ENCODE measurements at regions of chr10 and their contacts with region 1.

Region 1: DNA sequence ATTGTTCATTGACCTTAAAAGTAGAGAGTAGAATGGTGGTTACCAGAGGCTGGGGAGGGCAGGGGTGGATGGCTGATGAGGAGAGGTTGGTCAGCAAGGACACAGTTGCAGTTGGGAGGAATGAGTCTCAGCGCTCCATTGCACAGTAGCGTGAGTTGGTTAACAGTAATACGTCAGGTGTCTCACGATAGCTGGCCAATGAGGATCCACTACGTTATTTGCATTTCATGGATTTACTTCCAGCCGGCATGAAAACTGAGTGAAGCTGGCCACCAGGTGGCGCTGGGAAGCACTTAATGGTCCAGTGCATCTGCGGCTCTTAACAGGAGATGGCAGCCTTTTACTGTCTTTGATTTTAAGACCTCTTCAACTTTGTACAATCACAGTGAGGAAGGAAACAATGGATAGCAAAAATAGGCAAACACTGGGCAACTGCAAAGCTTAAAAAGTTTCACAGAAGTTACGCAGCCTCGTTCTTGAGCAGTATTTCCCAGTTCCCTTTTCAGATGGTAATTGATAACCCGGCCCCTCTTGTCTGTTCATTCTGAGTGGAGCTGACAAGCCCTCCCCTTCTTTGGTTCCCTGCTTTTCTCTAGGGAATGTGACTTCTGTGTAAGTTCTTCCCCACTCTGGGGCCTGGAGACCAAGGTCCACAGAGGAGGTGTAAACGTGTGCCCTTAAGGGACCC is 23.7 kb downstream of the AKR1E2 start:
- DNase-seq: peak; percentile 98
- H3K4me3 ChIP-seq: no peak overlapping the region
- H3K27ac ChIP-seq: no peak overlapping the region
- H3K4me1 ChIP-seq: peaks cover 22% of the 10 kb centered on the region
- H3K27me3 ChIP-seq: no peaks in the 10 kb centered on the region
- CTCF ChIP-seq: peak; percentile 95 to 100
- POLR2A ChIP-seq: no peak

Region 2: DNA sequence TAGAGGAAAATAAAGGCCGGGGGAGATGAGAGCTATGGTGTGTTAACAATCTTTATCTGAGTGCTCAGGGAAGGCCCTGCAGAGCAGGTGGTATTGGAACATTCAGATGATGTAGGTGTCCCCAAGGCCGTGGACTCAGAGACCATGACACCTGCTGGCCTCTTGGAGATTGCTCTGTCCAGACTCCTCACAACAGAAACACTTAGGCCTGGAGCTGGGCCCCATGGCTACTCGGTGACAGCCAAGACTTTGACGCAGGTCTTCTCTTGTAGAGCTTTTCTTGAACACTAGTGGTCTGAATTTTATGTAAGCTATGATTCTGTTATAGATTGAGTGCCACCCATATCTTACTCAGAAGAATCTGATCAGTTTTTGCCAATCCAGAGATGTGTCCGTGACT is 10.3 kb before region 1 on chr10:
- CTCF ChIA-PET with region 1: interaction called, 22 read pairs
- POLR2A ChIA-PET with region 1: no interaction called
- dilution Hi-C with region 1: no loop called
- intact Hi-C with region 1: no loop called
- DNase-seq: no peak
- H3K4me3 ChIP-seq: no peak overlapping the region
- H3K27ac ChIP-seq: no peak overlapping the region
- H3K4me1 ChIP-seq: no peaks in the 10 kb centered on the region
- H3K27me3 ChIP-seq: no peaks in the 10 kb centered on the region
- CTCF ChIP-seq: peak in 1 of 2 donors; percentile 1
- POLR2A ChIP-seq: no peak

Region 3: DNA sequence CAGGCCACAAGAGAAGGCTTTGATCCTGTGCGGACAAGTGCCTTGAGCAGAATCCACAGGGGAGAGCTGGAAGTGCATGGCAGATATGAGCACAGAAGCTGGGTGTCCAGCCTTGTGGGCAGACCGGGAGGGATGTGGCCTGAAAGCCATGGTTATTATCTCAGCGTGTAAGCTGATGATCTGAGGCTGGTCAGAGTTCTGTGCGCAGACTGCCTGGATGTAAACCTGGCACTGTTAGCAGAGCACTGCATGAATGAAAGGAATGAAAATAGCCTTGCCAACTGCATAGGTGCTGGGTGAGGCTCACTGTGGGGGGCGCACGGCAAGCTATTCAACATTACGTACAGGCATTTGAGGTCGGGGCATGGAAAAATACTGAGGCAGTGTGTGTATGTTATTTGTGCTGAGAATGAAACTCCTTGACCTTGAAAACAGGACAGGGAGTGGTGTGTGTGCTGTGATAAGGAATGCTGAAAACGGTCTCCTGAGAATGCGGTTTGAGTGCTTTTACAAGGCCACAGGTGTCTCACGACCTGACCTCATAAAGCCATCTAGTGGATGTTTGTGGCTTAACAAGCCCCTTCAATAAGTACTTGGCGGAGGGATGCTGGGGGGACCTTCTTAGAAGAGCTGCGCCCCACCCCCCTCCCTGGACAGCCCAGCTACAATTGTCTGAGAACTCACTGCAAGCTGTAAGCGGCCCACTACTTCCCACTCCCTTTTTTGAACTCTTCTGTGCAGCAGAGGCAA is 132.2 kb after region 1 on chr10:
- CTCF ChIA-PET with region 1: interaction called, 136 read pairs
- POLR2A ChIA-PET with region 1: interaction called, 3 read pairs
- dilution Hi-C with region 1: no loop called
- intact Hi-C with region 1: loop called (anchors 1 kb)
- DNase-seq: peak; percentile 62
- H3K4me3 ChIP-seq: no peak overlapping the region
- H3K27ac ChIP-seq: no peak overlapping the region
- H3K4me1 ChIP-seq: peaks cover 3% of the 10 kb centered on the region
- H3K27me3 ChIP-seq: peaks cover 0 to 3% of the 10 kb centered on the region in 2 experiments
- CTCF ChIP-seq: peak; percentile 48 to 50
- POLR2A ChIP-seq: no peak

Region 4: DNA sequence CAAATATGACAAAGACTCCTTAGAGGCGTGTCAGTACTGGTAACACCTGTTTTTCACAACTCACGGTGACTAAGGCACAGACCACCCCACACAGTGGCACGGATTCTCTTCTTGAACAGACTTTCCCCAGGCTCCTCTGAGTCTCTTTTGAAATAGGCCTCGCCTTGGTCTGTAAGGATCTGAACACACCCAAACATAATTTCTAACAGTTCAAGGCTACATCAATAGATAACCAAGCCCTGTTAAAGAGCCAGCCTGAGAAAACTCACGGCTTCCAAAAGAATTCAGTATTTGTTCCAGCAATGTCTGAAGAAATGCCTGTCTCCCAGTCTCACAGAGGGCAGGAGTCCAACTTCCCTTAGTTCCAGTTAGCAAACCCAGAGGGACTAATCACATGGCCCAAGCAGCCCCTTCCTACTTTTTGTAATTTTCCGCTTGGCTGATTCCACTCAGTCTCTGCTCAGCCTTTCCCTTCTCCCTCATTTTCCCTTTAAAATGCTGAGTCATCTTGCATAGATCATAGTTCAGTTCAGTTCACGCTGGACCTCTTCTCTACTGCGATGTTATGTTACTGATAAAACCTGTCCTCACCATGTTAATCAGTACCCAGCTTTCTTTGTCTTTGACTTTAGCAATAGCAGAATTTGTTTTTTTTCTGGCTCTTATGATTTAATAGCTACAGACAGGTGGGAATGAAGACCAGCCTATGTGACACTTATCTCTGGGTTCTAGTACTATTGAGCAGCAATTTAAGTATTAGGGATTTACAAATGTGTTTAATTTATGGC is 221.9 kb after region 1 on chr10:
- CTCF ChIA-PET with region 1: no interaction called
- POLR2A ChIA-PET with region 1: no interaction called
- dilution Hi-C with region 1: no loop called
- intact Hi-C with region 1: no loop called
- DNase-seq: peak; percentile 78
- H3K4me3 ChIP-seq: no peak overlapping the region
- H3K27ac ChIP-seq: no peak overlapping the region
- H3K4me1 ChIP-seq: peaks cover 3% of the 10 kb centered on the region
- H3K27me3 ChIP-seq: no peaks in the 10 kb centered on the region
- CTCF ChIP-seq: no peak
- POLR2A ChIP-seq: no peak

Region 5: GRCh38 chr10:5293691-5294550 is 444.2 kb after region 1 on chr10:
- CTCF ChIA-PET with region 1: interaction called, 10 read pairs
- POLR2A ChIA-PET with region 1: no interaction called
- dilution Hi-C with region 1: no loop called
- intact Hi-C with region 1: no loop called
- DNase-seq: peak; percentile 44
- H3K4me3 ChIP-seq: no peak overlapping the region
- H3K27ac ChIP-seq: peak overlapping the region; percentile 20
- H3K4me1 ChIP-seq: peaks cover 29% of the 10 kb centered on the region
- H3K27me3 ChIP-seq: no peaks in the 10 kb centered on the region
- CTCF ChIP-seq: peak; percentile 63 to 70
- POLR2A ChIP-seq: no peak

Region 6: GRCh38 chr10:5423771-5424170 is 574.1 kb after region 1 on chr10:
- CTCF ChIA-PET with region 1: interaction called, 20 read pairs
- POLR2A ChIA-PET with region 1: no interaction called
- dilution Hi-C with region 1: no loop called
- intact Hi-C with region 1: no loop called
- DNase-seq: peak; percentile 55
- H3K4me3 ChIP-seq: no peak overlapping the region
- H3K27ac ChIP-seq: no peak overlapping the region
- H3K4me1 ChIP-seq: peaks cover 14% of the 10 kb centered on the region
- H3K27me3 ChIP-seq: no peaks in the 10 kb centered on the region
- CTCF ChIP-seq: no peak
- POLR2A ChIP-seq: no peak

Region 7: GRCh38 chr10:5623081-5623748 is 773.5 kb after region 1 on chr10:
- CTCF ChIA-PET with region 1: interaction called, 10 read pairs
- POLR2A ChIA-PET with region 1: no interaction called
- dilution Hi-C with region 1: no loop called
- intact Hi-C with region 1: loop called (anchors 2 kb)
- DNase-seq: peak; percentile 75
- H3K4me3 ChIP-seq: no peak overlapping the region
- H3K27ac ChIP-seq: no peak overlapping the region
- H3K4me1 ChIP-seq: no peaks in the 10 kb centered on the region
- H3K27me3 ChIP-seq: no peaks in the 10 kb centered on the region
- CTCF ChIP-seq: peak; percentile 89 to 94
- POLR2A ChIP-seq: no peak

Measured in endothelial cell of umbilical vein (primary cell).